Caco-2 (cell line): ENCODE measurements at regions of chr12 and their contacts with region 1.

Region 1: DNA sequence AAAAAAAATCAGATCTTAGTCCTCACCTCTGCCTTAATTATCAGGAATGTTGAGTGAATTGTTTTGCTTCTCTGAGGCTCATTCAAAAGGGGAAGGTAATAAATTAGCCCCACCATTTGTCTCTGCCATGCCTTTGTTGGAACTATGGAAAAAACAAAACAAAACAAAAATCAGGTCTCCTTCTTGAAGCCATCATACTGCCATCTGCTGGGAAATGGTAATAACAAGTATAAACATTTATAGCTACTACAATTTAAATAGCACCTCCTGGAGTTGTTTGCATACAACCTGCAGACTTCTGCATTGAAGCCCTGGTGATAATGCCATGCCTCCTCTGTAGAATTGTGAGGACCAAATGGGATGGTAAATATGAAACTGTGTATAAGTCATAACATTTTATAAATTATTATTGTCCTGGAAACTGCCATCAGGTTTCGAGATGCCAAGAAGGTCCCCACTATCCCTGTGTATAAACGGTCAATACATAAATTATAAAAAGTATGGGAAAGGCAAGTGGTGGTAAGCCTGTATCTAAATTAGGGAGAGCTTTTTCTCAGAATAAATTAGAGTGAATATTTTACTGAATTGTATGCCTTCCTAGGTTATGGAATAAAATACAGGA is 87.2 kb upstream of the FGD4 start:
- DNase-seq: peak in 1 of 2 experiments; percentile 58
- H3K4me3 ChIP-seq: no peak overlapping the region
- H3K4me3 Mint-ChIP-seq: peak overlapping the region; percentile 1
- H3K27ac Mint-ChIP-seq: peak overlapping the region; percentile 42
- H3K4me1 ChIP-seq: peaks cover 35% of the 10 kb centered on the region
- H3K4me1 Mint-ChIP-seq: peaks cover 41% of the 10 kb centered on the region
- H3K27me3 ChIP-seq: no peaks in the 10 kb centered on the region
- H3K27me3 Mint-ChIP-seq: no peaks in the 10 kb centered on the region
- CTCF ChIP-seq: peak; percentile 54 to 61

Region 2: DNA sequence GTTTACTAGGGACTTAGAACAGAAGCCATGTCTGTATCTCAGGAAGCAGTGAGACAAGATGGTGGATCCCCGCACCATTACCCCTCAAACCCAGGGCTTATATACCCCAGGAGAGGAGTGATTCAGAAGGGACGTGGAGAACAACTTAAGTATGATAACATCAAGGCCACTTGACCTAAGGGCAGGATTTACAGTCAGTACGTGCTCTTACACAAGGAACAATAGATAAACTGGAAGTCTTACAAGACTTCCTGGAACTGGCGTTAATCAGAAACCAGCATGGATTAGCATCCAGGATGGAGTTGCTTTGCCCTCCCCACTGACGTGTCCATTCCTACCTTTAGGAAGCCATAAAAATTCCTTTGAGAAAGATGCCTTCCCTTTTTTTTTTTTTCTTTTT is 661.2 kb before region 1 on chr12:
- CTCF ChIA-PET with region 1: interaction called, 55 read pairs
- POLR2A ChIA-PET with region 1: no interaction called
- intact Hi-C with region 1: loop called (anchors 1 kb)
- DNase-seq: peak; percentile 82 to 90
- H3K4me3 ChIP-seq: no peak overlapping the region
- H3K4me3 Mint-ChIP-seq: peak overlapping the region; percentile 38
- H3K27ac Mint-ChIP-seq: peak overlapping the region; percentile 95
- H3K4me1 ChIP-seq: peaks cover 30% of the 10 kb centered on the region
- H3K4me1 Mint-ChIP-seq: peaks cover 25% of the 10 kb centered on the region
- H3K27me3 ChIP-seq: no peaks in the 10 kb centered on the region
- H3K27me3 Mint-ChIP-seq: no peaks in the 10 kb centered on the region
- CTCF ChIP-seq: no peak

Region 3: GRCh38 chr12:32062881-32063280 is 249.3 kb before region 1 on chr12:
- CTCF ChIA-PET with region 1: interaction called, 12 read pairs
- POLR2A ChIA-PET with region 1: no interaction called
- intact Hi-C with region 1: loop called (anchors 2 kb)
- DNase-seq: no peak
- H3K4me3 ChIP-seq: no peak overlapping the region
- H3K4me3 Mint-ChIP-seq: no peak overlapping the region
- H3K27ac Mint-ChIP-seq: no peak overlapping the region
- H3K4me1 ChIP-seq: no peaks in the 10 kb centered on the region
- H3K4me1 Mint-ChIP-seq: no peaks in the 10 kb centered on the region
- H3K27me3 ChIP-seq: no peaks in the 10 kb centered on the region
- H3K27me3 Mint-ChIP-seq: no peaks in the 10 kb centered on the region
- CTCF ChIP-seq: no peak

Region 4: DNA sequence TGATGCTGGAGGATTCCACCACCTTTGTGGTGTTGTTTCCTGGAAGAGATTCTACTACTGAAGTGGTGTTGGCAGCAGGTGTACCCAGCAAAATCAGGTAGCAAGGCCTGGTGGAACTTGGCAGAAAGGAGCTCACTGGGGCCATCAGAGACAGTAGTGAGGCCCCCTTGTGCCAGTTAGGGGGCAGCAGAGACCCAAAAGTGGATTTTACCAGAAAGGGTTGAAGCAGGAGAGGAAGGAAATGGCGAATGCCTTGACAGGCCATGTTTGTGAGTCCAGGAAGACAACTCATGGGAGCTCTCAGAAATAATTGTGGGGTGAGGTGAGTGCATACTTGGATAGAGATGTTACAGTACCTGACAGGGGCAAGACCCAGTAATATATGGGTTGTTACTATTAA is 50.5 kb before region 1 on chr12:
- CTCF ChIA-PET with region 1: interaction called, 14 read pairs
- POLR2A ChIA-PET with region 1: no interaction called
- intact Hi-C with region 1: loop called (anchors 1 kb)
- DNase-seq: peak; percentile 46 to 49
- H3K4me3 ChIP-seq: no peak overlapping the region
- H3K4me3 Mint-ChIP-seq: no peak overlapping the region
- H3K27ac Mint-ChIP-seq: no peak overlapping the region
- H3K4me1 ChIP-seq: peaks cover 7% of the 10 kb centered on the region; the same call in 1 of the 2 replicates
- H3K4me1 Mint-ChIP-seq: peaks cover 29% of the 10 kb centered on the region
- H3K27me3 ChIP-seq: no peaks in the 10 kb centered on the region
- H3K27me3 Mint-ChIP-seq: no peaks in the 10 kb centered on the region
- CTCF ChIP-seq: peak; percentile 24 to 39